Activated CD8-positive, alpha-beta memory T cell treated with anti-CD3 and anti-CD28 coated beads, Interleukin-2, amount 10 ng/mL, durations not matched to agents 7 days and 5 days (primary cell): ENCODE measurements at regions of chr1 and their contacts with region 1.

Region 1: GRCh38 chr1:92858564-92859399 is 26.9 kb downstream of the RPL5 start:
- DNase-seq: peak; percentile 72
- ATAC-seq: peak; percentile 89
- H3K4me3 Mint-ChIP-seq: peak overlapping the region; percentile 23
- H3K27ac Mint-ChIP-seq: peak overlapping the region; percentile 10
- H3K4me1 Mint-ChIP-seq: peaks cover 17% of the 10 kb centered on the region
- H3K27me3 Mint-ChIP-seq: no peaks in the 10 kb centered on the region

Region 2: DNA sequence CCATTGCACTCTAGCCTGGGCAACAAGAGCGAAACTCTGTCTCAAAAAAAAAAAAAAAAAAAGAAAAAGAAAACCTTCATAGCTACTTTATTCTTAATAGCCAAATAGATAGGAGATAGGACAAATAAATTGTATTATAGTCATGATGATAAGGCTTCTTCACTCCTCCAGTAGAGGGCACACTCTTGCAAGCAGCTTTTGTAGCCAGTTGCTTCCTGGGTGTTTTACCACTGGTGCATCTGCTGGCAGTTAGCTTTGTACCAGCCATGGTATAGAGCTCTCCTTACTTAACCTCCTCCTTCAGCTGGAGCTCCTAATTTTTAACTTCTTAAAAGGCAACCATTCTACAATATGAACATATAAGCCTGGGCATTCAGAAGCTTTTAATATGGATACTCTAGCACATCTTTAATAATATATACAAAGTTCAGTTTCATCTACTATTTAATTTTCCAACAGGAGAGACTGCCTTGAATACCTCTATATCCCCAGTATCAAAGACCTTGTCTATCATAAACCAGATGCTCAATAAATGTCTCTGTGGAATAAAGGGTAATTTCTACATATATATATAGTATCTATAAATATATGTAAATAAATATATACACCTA is 109.7 kb before region 1 on chr1:
- CTCF ChIA-PET with region 1: no interaction called
- DNase-seq: peak; percentile 48
- ATAC-seq: peak; percentile 60
- H3K4me3 Mint-ChIP-seq: no peak overlapping the region
- H3K27ac Mint-ChIP-seq: no peak overlapping the region
- H3K4me1 Mint-ChIP-seq: no peaks in the 10 kb centered on the region
- H3K27me3 Mint-ChIP-seq: peaks cover 19% of the 10 kb centered on the region

Region 3: DNA sequence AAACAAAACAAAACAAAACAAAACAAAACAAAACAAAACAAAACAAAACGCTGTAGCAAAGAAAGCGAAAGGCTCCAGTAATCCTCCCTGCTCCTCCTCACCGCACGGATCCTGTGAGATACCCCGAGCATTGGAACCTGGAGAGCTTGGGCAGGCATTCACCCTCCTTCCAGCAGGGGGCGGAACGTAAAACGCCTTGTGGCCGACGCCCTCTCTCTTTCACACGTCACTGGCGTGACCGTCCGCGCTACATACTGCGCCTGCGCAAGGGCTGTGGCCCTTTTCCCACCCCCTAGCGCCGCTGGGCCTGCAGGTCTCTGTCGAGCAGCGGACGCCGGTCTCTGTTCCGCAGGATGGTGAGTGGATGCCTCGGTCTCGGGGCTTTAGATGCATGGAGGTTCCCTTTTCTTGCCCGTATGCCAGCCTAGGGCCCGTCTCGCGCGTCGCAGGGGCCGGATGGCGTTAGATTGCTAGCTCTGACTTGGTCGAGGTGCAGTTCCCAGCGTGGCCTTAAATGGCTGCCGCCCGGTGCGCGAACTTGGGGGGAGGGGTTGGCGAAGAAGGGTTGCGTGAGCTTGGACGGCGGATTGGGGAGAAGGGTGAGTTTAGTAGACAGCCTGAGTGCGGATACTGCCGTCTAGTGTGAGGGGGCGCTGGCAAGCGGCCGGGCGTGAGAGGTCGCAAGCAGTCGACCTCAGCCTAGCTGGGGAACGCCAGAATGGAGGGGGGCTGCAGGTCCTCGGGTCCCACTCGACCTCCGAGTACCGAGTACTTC is 26.8 kb before region 1 on chr1 and contains the start of gene RPL5:
- CTCF ChIA-PET with region 1: interaction called, 14 read pairs
- DNase-seq: peak; percentile 98
- ATAC-seq: peak; percentile 89
- H3K4me3 Mint-ChIP-seq: peak within 1 kb of the TSS; percentile 99
- H3K27ac Mint-ChIP-seq: peak within 1 kb of the TSS; percentile 97
- H3K4me1 Mint-ChIP-seq: peaks cover 44% of the 10 kb centered on the region
- H3K27me3 Mint-ChIP-seq: no peaks in the 10 kb centered on the region
- total RNA-seq, gene RPL5: 581 to 800 TPM

Region 4: GRCh38 chr1:92872719-92873118 is 13.9 kb after region 1 on chr1:
- CTCF ChIA-PET with region 1: interaction called, 15 read pairs
- DNase-seq: no peak
- ATAC-seq: no peak
- H3K4me3 Mint-ChIP-seq: no peak overlapping the region
- H3K27ac Mint-ChIP-seq: no peak overlapping the region
- H3K4me1 Mint-ChIP-seq: peaks cover 9% of the 10 kb centered on the region
- H3K27me3 Mint-ChIP-seq: no peaks in the 10 kb centered on the region

Region 5: GRCh38 chr1:92882819-92883218 is 24.0 kb after region 1 on chr1:
- CTCF ChIA-PET with region 1: interaction called, 18 read pairs
- DNase-seq: peak; percentile 61
- ATAC-seq: peak; percentile 91
- H3K4me3 Mint-ChIP-seq: no peak overlapping the region
- H3K27ac Mint-ChIP-seq: peak overlapping the region; percentile 66
- H3K4me1 Mint-ChIP-seq: peaks cover 26% of the 10 kb centered on the region
- H3K27me3 Mint-ChIP-seq: no peaks in the 10 kb centered on the region

Region 6: DNA sequence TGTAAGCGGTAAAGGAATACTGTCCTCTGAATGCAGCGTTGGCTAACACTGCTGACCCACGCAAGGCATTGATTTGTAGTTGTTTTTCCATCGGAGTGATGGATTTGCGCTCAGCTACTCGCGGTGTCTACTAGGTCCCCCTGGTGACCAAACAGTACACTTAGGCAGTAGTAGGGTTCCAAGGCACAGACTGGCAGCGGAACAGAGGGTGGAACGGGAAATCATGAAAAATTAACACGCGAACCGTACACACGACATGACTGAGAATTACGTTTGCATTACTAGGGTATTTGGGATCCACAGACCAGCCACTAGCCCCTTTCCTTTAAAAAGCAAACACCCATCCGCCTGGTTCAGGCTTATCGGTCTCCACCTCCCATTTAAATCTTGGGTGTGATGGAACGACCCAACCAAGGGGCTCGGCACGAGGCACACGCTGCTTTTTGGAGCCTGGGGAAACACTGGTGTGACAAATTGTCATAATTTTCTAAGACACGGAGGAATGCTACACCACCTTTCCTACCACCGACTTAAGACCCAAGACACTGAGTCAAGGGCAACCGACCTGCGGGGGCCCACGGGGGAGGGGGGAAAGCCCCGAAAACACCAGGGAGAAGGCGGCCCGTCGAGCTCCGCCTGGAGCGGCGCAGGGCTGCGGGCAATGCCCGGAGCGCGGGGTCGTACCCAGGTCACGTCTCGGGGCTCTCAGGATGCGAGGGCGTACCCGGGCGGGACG is 101.8 kb after region 1 on chr1:
- CTCF ChIA-PET with region 1: interaction called, 160 read pairs
- DNase-seq: peak; percentile 81
- ATAC-seq: peak; percentile 50
- H3K4me3 Mint-ChIP-seq: no peak overlapping the region
- H3K27ac Mint-ChIP-seq: peak overlapping the region; percentile 96
- H3K4me1 Mint-ChIP-seq: peaks cover 38% of the 10 kb centered on the region
- H3K27me3 Mint-ChIP-seq: no peaks in the 10 kb centered on the region

Region 7: GRCh38 chr1:92994105-92994712 is 135.4 kb after region 1 on chr1:
- CTCF ChIA-PET with region 1: interaction called, 90 read pairs
- DNase-seq: peak; percentile 85
- ATAC-seq: peak; percentile 87
- H3K4me3 Mint-ChIP-seq: no peak overlapping the region
- H3K27ac Mint-ChIP-seq: peak overlapping the region; percentile 11
- H3K4me1 Mint-ChIP-seq: peaks cover 54% of the 10 kb centered on the region
- H3K27me3 Mint-ChIP-seq: no peaks in the 10 kb centered on the region